Activated T-helper 1 cell treated with anti-CD3 and anti-CD28 coated beads, Interleukin-12 subunit alpha, Interleukin-12 subunit beta, Interleukin-2, Interleukin-4 antibody, amounts not matched to agents 30 ng/mL and 10 ng/mL and 1 ng/mL, durations not matched to agents 14 hours and 24 hours and 36 hours (primary cell): ENCODE measurements at regions of chr11 and their contacts with region 1.

Region 1: GRCh38 chr11:111932611-111932950 is 4.6 kb upstream of the DIXDC1 start:
- DNase-seq: no peak
- H3K4me3 Mint-ChIP-seq: no peak overlapping the region
- H3K27ac Mint-ChIP-seq: peak overlapping the region; percentile 24
- H3K4me1 Mint-ChIP-seq: peaks cover 34% of the 10 kb centered on the region
- H3K27me3 Mint-ChIP-seq: peaks cover 2% of the 10 kb centered on the region

Region 2: GRCh38 chr11:111310088-111310487 is 622.5 kb before region 1 on chr11:
- intact Hi-C with region 1: no loop called
- DNase-seq: no peak
- H3K4me3 Mint-ChIP-seq: no peak overlapping the region
- H3K27ac Mint-ChIP-seq: no peak overlapping the region
- H3K4me1 Mint-ChIP-seq: no peaks in the 10 kb centered on the region
- H3K27me3 Mint-ChIP-seq: peaks cover 35% of the 10 kb centered on the region

Region 3: DNA sequence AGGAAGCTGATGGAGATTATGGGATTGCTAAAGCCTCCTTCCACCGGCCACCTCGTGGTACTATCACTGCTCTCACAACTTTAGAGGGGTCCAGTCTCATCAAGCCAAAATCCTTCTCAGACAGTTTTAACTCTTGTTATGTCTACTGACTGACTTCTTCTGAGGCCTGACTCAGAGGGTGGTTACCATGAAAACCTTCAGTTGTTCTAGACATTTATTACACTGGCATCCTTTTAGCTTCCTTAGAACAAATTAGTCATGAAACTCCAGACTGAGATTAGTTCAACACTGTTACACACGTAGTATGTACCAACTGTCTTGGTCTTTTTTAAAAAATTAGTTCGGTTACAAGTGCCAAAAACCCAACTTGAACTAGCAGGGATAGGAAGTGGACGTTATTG is 12.1 kb after region 1 on chr11:
- intact Hi-C with region 1: loop called (anchors 1 kb)
- DNase-seq: no peak
- H3K4me3 Mint-ChIP-seq: no peak overlapping the region
- H3K27ac Mint-ChIP-seq: peak overlapping the region; percentile 92
- H3K4me1 Mint-ChIP-seq: peaks cover 32% of the 10 kb centered on the region
- H3K27me3 Mint-ChIP-seq: no peaks in the 10 kb centered on the region